Cardiac septum (tissue), 1 donor: ENCODE measurements at regions of chr5 and their contacts with region 1.

Region 1: GRCh38 chr5:172188033-172188892 is at the start of gene STK10:
- DNase-seq: peak; percentile 95
- total RNA-seq, gene STK10: 12.1 TPM

Region 2: GRCh38 chr5:171874234-171874633 is 314.0 kb before region 1 on chr5:
- intact Hi-C with region 1: no loop called
- DNase-seq: no peak

Region 3: DNA sequence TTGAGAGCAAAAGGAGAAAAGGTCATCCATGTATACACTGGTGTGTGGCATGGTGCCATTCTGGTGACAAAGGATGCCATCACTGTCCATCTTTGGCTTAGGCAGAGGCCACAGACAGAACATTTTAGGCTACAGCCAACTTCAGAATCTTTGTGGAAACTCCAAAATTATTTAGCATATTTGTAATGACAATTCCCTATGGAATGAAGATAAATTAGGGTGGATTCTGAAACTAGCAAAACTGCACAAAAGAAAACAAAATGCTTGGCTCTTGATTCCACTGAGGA is 274.3 kb before region 1 on chr5:
- intact Hi-C with region 1: loop called (anchors 5 kb)
- DNase-seq: no peak

Region 4: GRCh38 chr5:172006321-172007174 is 181.7 kb before region 1 on chr5 and contains the start of gene FBXW11:
- intact Hi-C with region 1: loop called (anchors 2 kb)
- DNase-seq: peak; percentile 98
- total RNA-seq, gene FBXW11: 94.4 TPM

Region 5: GRCh38 chr5:172044631-172045314 is 143.5 kb before region 1 on chr5:
- intact Hi-C with region 1: no loop called
- DNase-seq: peak; percentile 47

Region 6: DNA sequence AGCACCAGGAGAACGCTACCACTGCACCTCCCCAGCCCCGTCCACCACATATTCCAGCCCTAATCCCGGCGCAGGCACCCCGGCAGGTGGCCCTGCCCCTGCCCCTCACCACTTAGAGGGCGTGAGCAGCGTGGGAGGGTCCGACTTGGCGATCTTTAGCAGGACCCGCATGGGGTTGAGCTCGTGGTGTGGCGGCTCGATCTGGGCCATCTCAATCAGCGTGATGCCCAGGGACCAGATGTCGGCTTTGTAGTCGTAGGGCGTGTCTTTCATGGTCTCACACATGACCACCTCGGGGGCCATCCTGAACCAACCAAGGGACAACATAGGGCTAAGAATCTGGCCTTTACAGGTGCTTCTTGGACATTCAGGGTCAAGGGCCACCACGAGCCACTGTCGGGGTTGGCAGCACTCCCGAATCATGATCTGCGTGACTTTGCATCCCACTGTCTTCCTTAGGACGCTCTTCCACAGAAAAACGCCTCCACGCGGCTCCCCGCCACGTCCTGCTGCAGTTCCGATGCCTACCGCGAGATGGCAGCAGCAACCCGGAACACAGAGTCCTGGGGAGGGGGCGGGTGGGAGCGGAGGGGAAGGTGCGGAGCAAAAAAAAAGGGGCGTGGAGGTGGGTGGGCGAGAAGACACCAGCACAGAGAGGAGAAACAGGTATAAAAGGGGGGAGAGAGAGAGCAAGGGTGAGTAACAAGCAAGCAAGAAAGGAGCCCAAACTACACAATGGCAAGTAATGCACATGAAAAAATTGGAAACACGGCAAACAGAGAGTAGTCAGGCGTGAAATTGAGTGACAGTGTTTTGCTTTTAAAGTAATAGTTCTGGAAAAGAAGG is 81.5 kb before region 1 on chr5:
- intact Hi-C with region 1: loop called (anchors 1 kb)
- DNase-seq: peak; percentile 87

Region 7: GRCh38 chr5:172283020-172283861 is 95.0 kb after region 1 on chr5 and contains the start of gene UBTD2:
- intact Hi-C with region 1: loop called (anchors 2 kb)
- DNase-seq: peak; percentile 94
- total RNA-seq, gene UBTD2: 11.8 TPM

Region 8: DNA sequence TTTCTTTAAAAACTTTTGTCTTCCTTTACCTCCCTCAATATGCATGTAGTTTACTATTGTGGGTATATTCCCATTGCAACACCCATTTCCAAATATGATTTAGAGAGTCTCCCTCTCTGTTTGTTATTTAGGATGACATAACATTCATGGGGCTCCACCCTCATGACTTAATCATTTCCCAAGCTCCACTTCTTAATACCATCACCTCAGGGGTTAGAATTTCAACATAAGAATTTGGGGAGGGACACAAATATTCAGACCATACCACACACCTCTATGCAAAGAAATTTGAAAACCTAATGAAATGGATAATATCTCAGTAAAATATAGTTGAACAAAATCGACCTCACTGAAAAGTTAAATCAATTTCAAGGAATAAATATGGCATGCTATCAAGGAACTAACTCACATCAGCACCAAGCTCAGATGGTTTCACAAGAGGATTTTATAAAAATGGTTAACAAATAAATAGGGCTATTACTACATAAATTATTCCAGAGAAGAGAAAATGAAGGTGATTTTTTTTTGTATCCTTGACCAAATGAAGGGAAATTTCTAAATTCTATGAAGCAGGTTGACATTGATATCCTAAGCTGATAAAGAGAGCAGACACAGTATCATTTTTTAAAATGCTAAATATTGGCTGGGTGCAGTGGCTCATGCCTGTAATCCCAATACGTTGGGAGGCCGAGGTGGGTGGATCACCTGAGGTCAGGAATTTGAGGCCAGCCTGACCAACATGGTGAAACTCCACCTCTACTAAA is 115.5 kb after region 1 on chr5:
- intact Hi-C with region 1: no loop called
- DNase-seq: no peak

Region 9: DNA sequence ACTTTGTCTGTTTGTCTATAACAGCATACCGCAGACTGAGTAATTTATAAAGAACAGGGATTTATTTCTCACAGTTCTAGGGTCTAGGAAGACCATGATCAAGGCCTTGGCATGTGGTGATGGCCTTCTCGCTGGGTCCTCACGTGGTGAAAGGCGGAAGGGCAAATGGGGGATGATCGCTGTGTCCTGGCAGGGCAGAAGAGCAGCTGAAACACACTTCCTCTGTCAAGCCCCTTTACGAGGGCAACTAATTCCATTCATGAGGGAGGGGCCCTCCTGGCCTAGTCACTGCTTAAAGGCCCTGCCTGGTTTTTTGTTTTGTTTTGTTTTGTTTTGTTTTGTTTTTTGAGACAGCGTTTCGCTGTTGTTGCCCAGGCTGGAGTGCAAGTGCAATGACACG is 137.2 kb after region 1 on chr5:
- intact Hi-C with region 1: no loop called
- DNase-seq: no peak

Region 10: GRCh38 chr5:172443441-172444109 is 255.3 kb after region 1 on chr5:
- intact Hi-C with region 1: loop called (anchors 10 kb)
- DNase-seq: peak; percentile 89